IMR-90 (cell line): ENCODE measurements at regions of chr5 and their contacts with region 1.

Region 1: DNA sequence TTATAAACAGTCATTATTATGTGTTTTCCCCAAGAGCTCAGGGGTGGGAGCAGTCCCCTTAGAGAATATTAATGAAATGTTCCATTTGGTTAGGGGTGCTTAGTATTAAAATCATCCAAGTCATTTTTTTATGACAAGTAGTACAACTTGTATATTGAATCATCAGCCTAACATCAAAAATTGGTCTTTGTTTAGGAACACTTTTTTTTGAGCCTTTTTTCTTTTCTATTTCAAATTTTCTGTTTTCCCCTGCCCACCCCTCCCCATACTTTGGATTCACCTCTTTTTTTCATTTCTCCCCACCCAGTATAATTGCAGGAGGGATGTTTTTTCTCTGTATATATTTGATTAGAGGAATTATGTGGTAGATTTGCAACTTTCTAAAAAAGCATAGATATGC is 25.8 kb downstream of the RBM27 start:
- DNase-seq: no peak
- ATAC-seq: no peak
- H3K4me3 ChIP-seq: no peak overlapping the region
- H3K27ac ChIP-seq: no peak overlapping the region
- H3K4me1 ChIP-seq: no peaks in the 10 kb centered on the region
- H3K27me3 ChIP-seq: no peaks in the 10 kb centered on the region
- CTCF ChIP-seq: no peak
- POLR2A ChIP-seq: no peak
- RAD21 ChIP-seq: no peak

Region 2: DNA sequence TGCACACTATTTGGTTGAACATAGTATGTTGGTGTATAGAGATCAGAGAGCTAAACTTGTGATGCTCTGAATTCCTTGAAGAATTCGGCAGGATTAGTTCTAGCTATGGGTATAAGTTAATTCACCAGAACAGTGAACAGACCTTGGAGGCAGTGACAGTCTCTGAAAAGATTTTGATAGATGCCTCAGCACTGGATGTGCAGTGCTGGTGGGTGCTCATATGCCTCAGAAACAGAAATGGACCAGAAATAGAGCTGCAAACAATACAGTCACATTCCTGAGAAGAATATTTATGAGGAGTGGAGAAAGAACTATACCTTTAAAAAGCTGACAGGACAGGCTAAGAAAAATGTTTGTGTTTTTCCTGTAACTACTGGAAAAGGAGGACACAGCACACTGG is 1310.9 kb before region 1 on chr5:
- CTCF ChIA-PET with region 1: no interaction called
- POLR2A ChIA-PET with region 1: no interaction called
- dilution Hi-C with region 1: no loop called
- in situ Hi-C with region 1: no loop called
- intact Hi-C with region 1: no loop called
- DNase-seq: no peak
- ATAC-seq: no peak
- H3K4me3 ChIP-seq: no peak overlapping the region
- H3K27ac ChIP-seq: no peak overlapping the region
- H3K4me1 ChIP-seq: no peaks in the 10 kb centered on the region
- H3K27me3 ChIP-seq: no peaks in the 10 kb centered on the region
- CTCF ChIP-seq: no peak
- POLR2A ChIP-seq: no peak
- RAD21 ChIP-seq: no peak

Region 3: DNA sequence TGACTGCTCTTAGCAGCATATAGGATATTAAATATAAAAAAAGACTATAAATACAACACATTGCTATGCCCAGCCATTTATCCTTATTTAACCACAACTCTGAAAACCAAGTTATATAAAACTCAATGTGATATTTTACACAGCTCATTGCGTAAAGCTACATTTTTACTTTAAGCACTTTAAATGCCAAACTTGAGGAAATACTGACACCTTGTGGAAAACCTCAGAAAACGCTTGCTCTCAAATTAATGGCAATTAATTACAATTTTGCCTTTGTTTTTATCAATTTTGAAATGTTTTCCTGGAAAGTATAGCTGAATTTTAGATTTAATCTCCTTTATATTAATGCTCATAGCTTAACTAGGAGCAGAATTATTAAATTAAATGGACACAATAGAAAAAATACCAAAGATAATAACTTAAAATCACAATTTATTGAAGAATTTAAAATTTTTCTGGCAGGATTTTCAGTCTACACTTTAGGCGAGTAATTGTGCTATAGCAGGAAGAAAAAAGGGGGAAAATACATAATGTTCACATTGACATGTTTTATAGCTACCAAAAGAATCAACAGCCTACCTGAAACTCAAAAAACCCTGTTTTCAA is 98.7 kb before region 1 on chr5:
- CTCF ChIA-PET with region 1: no interaction called
- POLR2A ChIA-PET with region 1: no interaction called
- dilution Hi-C with region 1: no loop called
- in situ Hi-C with region 1: no loop called
- intact Hi-C with region 1: no loop called
- DNase-seq: peak; percentile 53
- ATAC-seq: no peak
- H3K4me3 ChIP-seq: no peak overlapping the region
- H3K27ac ChIP-seq: no peak overlapping the region
- H3K4me1 ChIP-seq: no peaks in the 10 kb centered on the region
- H3K27me3 ChIP-seq: no peaks in the 10 kb centered on the region
- CTCF ChIP-seq: peak; percentile 68
- POLR2A ChIP-seq: no peak
- RAD21 ChIP-seq: peak; percentile 68

Region 4: DNA sequence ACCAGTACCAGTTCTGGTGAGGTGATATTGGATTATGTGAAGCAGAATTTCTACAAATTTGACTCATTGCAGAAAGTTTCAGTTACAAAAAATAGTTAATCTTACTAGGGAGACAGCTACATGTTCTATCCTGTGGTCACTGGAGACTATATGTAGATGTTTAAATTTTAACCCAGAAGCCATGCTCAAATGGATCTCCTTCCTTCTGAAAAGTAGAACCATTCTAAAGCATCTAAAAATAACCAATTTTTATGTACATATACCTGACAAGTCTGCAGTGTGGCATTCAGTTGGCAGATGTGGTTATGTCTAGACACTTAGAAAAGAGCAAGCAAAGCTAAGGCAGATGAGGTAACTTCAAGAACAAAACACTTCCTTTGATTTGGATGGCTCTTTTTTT is 43.9 kb after region 1 on chr5:
- CTCF ChIA-PET with region 1: no interaction called
- POLR2A ChIA-PET with region 1: no interaction called
- dilution Hi-C with region 1: no loop called
- in situ Hi-C with region 1: no loop called
- intact Hi-C with region 1: loop called (anchors 5 kb)
- DNase-seq: no peak
- ATAC-seq: no peak
- H3K4me3 ChIP-seq: no peak overlapping the region
- H3K27ac ChIP-seq: no peak overlapping the region
- H3K4me1 ChIP-seq: no peaks in the 10 kb centered on the region
- H3K27me3 ChIP-seq: no peaks in the 10 kb centered on the region
- CTCF ChIP-seq: no peak
- POLR2A ChIP-seq: no peak
- RAD21 ChIP-seq: no peak

Region 5: DNA sequence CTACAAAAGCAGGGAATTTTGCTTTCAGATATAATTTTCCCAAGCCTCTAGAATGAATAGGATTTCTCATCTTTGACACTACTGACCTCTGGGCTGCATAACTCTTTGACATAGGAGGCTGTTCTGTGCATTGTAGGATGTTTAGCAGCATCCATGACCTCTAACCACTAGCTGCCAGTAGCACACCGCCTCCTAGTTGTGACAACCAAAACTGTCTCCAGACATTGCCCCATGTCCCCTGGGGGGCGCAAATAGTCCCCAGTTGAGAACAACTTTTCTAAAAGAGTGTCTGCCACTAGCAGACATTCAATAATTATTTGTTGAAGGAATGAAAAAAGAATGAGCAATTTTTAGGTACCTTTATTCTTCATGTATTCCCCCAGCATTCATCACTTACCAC is 161.2 kb after region 1 on chr5:
- CTCF ChIA-PET with region 1: no interaction called
- POLR2A ChIA-PET with region 1: no interaction called
- dilution Hi-C with region 1: no loop called
- in situ Hi-C with region 1: no loop called
- intact Hi-C with region 1: no loop called
- DNase-seq: no peak
- ATAC-seq: no peak
- H3K4me3 ChIP-seq: no peak overlapping the region
- H3K27ac ChIP-seq: no peak overlapping the region
- H3K4me1 ChIP-seq: no peaks in the 10 kb centered on the region
- H3K27me3 ChIP-seq: peaks cover 3% of the 10 kb centered on the region; the same call in 1 of the 2 replicates
- CTCF ChIP-seq: no peak
- POLR2A ChIP-seq: no peak
- RAD21 ChIP-seq: no peak